PC-9 (cell line): ENCODE measurements at regions of chr7 and their contacts with region 1.

Region 1: GRCh38 chr7:137454246-137454724 is 110.8 kb upstream of the PTN start:
- DNase-seq: peak in 1 of 2 experiments; percentile 38
- H3K4me3 ChIP-seq: no peak overlapping the region
- H3K27ac ChIP-seq: no peak overlapping the region
- H3K4me1 ChIP-seq: no peaks in the 10 kb centered on the region
- H3K27me3 ChIP-seq: 0 out of 2 replicates have a peak, but pooled peaks cover 11% of the 10 kb centered on the region
- CTCF ChIP-seq: peak; percentile 87

Region 2: DNA sequence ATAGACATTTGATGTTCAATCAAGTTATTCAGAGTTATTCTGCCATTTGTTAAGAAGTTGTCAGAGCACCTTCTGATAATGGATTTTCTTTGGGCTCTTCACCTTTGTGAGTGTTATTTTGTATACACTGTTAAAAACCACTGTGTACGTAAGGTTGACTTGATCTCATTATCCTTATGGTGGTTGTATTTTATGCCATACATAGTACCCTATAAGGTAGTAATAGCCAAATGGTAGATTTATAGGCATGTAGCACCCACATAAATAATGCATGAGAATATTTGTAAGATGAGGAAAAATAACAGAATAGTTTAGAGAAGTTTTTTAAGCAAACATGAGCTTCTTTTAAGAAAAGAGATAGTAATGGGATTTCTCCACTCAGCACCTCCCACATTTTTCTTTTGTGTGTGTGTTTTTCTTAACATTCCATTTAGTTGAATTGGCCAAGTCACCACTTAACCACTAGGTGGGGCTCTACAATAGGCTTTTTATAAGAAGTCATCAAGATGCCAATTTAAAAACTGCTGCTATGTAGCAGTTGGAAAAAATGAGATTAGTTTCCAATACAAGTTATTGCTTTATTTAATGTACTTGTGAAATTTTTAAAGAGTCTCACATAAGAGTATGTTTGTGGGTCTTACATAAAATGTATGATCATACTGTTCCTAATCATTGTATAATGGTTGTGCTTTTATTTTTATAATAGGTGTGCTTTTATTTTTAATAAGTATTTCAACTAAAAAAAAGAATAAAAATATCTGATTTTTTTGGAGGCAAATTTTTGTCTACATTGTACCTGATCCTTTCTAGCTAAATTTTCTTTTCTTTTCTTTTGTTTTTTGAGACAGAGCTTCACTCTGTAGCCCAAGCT is 1833.1 kb before region 1 on chr7:
- CTCF ChIA-PET with region 1: no interaction called
- POLR2A ChIA-PET with region 1: no interaction called
- intact Hi-C with region 1: loop called (anchors 5 kb)
- DNase-seq: peak; percentile 26 to 75
- H3K4me3 ChIP-seq: no peak overlapping the region
- H3K27ac ChIP-seq: no peak overlapping the region
- H3K4me1 ChIP-seq: no peaks in the 10 kb centered on the region
- H3K27me3 ChIP-seq: no peaks in the 10 kb centered on the region
- CTCF ChIP-seq: peak; percentile 94

Region 3: GRCh38 chr7:136405931-136406777 is 1048.1 kb before region 1 on chr7:
- CTCF ChIA-PET with region 1: no interaction called
- POLR2A ChIA-PET with region 1: no interaction called
- intact Hi-C with region 1: loop called (anchors 10 kb)
- DNase-seq: peak in 1 of 2 experiments; percentile 38
- H3K4me3 ChIP-seq: no peak overlapping the region
- H3K27ac ChIP-seq: no peak overlapping the region
- H3K4me1 ChIP-seq: no peaks in the 10 kb centered on the region
- H3K27me3 ChIP-seq: no peaks in the 10 kb centered on the region
- CTCF ChIP-seq: peak; percentile 92

Region 4: GRCh38 chr7:137169282-137169698 is 285.0 kb before region 1 on chr7:
- CTCF ChIA-PET with region 1: no interaction called
- POLR2A ChIA-PET with region 1: no interaction called
- intact Hi-C with region 1: loop called (anchors 1 kb)
- DNase-seq: peak in 1 of 2 experiments; percentile 32
- H3K4me3 ChIP-seq: no peak overlapping the region
- H3K27ac ChIP-seq: no peak overlapping the region
- H3K4me1 ChIP-seq: no peaks in the 10 kb centered on the region
- H3K27me3 ChIP-seq: no peaks in the 10 kb centered on the region
- CTCF ChIP-seq: peak; percentile 63

Region 5: GRCh38 chr7:137985253-137985896 is 531.1 kb after region 1 on chr7:
- CTCF ChIA-PET with region 1: no interaction called
- POLR2A ChIA-PET with region 1: no interaction called
- intact Hi-C with region 1: no loop called
- DNase-seq: no peak
- H3K4me3 ChIP-seq: no peak overlapping the region
- H3K27ac ChIP-seq: no peak overlapping the region
- H3K4me1 ChIP-seq: peaks cover 22% of the 10 kb centered on the region
- H3K27me3 ChIP-seq: no peaks in the 10 kb centered on the region
- CTCF ChIP-seq: no peak